Activated B cell treated with CpG ODN at 0.5 μM for 24 hours (primary cell): ENCODE measurements at regions of chr20 and their contacts with region 1.

Region 1: GRCh38 chr20:3316136-3316535 is 77.1 kb upstream of the SLC4A11 start:
- DNase-seq: no peak
- ATAC-seq: no peak
- H3K4me3 Mint-ChIP-seq: no peak overlapping the region
- H3K27ac Mint-ChIP-seq: no peak overlapping the region
- H3K4me1 Mint-ChIP-seq: no peaks in the 10 kb centered on the region
- H3K27me3 Mint-ChIP-seq: no peaks in the 10 kb centered on the region
- CTCF ChIP-seq: no peak

Region 2: GRCh38 chr20:2688041-2688591 is 628.0 kb before region 1 on chr20:
- CTCF ChIA-PET with region 1: no interaction called
- POLR2A ChIA-PET with region 1: no interaction called
- intact Hi-C with region 1: no loop called
- DNase-seq: no peak
- ATAC-seq: peak; percentile 16
- H3K4me3 Mint-ChIP-seq: no peak overlapping the region
- H3K27ac Mint-ChIP-seq: no peak overlapping the region
- H3K4me1 Mint-ChIP-seq: peaks cover 13% of the 10 kb centered on the region
- H3K27me3 Mint-ChIP-seq: peaks cover 46% of the 10 kb centered on the region
- CTCF ChIP-seq: no peak

Region 3: GRCh38 chr20:3051385-3052019 is 264.6 kb before region 1 on chr20:
- CTCF ChIA-PET with region 1: interaction called, 9 read pairs
- POLR2A ChIA-PET with region 1: interaction called, 9 read pairs
- intact Hi-C with region 1: loop called (anchors 1 kb)
- DNase-seq: no peak
- ATAC-seq: no peak
- H3K4me3 Mint-ChIP-seq: no peak overlapping the region
- H3K27ac Mint-ChIP-seq: no peak overlapping the region
- H3K4me1 Mint-ChIP-seq: peaks cover 6% of the 10 kb centered on the region
- H3K27me3 Mint-ChIP-seq: no peaks in the 10 kb centered on the region
- CTCF ChIP-seq: no peak

Region 4: DNA sequence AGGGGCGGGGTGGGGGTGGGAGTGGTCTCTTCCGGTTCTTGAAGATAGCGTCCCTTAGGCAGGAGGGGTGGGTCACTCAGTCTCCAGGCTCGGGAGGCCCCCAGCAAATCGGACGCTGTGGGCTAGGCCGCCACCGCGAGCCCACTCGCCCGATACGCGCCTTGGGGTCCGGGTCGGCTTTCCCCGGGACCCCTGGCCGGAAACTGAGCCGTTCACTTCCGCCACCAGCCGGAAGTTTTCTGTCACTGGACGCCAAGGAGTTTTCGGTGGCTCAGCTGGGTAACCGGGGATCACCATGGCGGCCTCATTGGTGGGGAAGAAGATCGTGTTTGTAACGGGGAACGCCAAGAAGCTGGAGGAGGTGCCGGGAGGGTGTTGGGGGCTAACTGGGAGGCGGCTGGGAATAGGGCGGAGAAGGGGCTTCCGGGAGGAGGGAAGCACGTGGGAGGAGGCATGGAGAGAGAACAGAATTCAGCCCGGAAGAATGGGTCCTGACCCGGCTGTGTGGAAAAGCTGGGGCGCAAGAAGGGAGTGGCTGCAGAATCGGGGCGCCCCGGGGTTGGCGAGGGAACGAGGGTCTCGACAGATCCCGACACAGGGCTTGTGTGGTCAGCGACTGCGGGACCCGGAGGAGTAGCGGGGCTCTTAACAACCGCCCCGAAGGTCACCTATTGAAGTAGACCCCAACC is 106.7 kb before region 1 on chr20 and contains the start of gene ITPA:
- CTCF ChIA-PET with region 1: no interaction called
- POLR2A ChIA-PET with region 1: no interaction called
- intact Hi-C with region 1: loop called (anchors 2 kb)
- DNase-seq: peak; percentile 58
- ATAC-seq: peak; percentile 47
- H3K4me3 Mint-ChIP-seq: peak within 1 kb of the TSS; percentile 98
- H3K27ac Mint-ChIP-seq: peak within 1 kb of the TSS; percentile 86
- H3K4me1 Mint-ChIP-seq: peaks cover 29% of the 10 kb centered on the region
- H3K27me3 Mint-ChIP-seq: no peaks in the 10 kb centered on the region
- CTCF ChIP-seq: no peak
- total RNA-seq, gene ITPA: 82.1 and 84.8 TPM in 2 replicates

Region 5: DNA sequence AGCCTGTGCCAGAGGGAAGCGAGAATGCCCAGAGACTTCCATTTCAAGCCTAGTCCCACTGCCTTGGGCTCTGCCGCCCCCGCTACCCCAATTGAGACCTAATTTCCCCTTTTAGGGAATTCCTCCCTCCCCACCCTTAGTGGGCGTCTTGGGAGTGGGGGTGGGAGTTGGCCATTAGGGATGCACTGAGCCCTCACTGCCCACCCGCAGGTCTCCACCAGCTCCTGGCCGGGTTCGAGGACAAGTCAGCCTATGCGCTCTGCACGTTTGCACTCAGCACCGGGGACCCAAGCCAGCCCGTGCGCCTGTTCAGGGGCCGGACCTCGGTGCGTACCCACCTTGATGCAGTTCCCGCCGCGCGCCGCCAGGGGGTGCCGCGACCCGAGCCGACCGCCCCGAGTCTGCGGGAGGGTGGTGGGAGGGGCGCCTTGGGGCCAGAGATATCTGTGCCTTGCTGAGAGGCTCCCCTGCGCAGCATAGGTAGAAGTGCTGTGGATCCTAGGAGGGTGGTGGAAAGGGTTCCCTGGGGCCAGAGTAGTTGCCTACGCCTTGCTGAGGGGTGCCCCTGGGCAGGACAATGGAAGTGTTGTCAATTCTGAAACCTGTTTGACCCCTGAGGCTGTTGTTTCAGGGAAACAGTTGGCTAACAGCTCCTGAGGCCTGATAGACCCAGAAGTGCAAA is 97.7 kb before region 1 on chr20:
- CTCF ChIA-PET with region 1: interaction called, 6 read pairs
- POLR2A ChIA-PET with region 1: no interaction called
- intact Hi-C with region 1: loop called (anchors 1 kb)
- DNase-seq: peak; percentile 69
- ATAC-seq: peak; percentile 86
- H3K4me3 Mint-ChIP-seq: no peak overlapping the region
- H3K27ac Mint-ChIP-seq: no peak overlapping the region
- H3K4me1 Mint-ChIP-seq: peaks cover 22% of the 10 kb centered on the region
- H3K27me3 Mint-ChIP-seq: no peaks in the 10 kb centered on the region
- CTCF ChIP-seq: no peak

Region 6: GRCh38 chr20:3987296-3987695 is 671.2 kb after region 1 on chr20:
- CTCF ChIA-PET with region 1: no interaction called
- POLR2A ChIA-PET with region 1: no interaction called
- intact Hi-C with region 1: no loop called
- DNase-seq: no peak
- ATAC-seq: no peak
- H3K4me3 Mint-ChIP-seq: no peak overlapping the region
- H3K27ac Mint-ChIP-seq: no peak overlapping the region
- H3K4me1 Mint-ChIP-seq: peaks cover 6% of the 10 kb centered on the region
- H3K27me3 Mint-ChIP-seq: no peaks in the 10 kb centered on the region
- CTCF ChIP-seq: no peak